ENCODE measurements at regions of chr17 and their contacts with region 1.

Region 1: GRCh38 chr17:43024407-43025289 is at the start of gene RND2:
- DNase-seq: peak; percentile 96 to 99
- ATAC-seq: peak; percentile 52 to 69
- H3K4me3 ChIP-seq: peak within 1 kb of the TSS; percentile 53
- H3K27ac ChIP-seq: peak within 1 kb of the TSS; percentile 78 to 88
- H3K4me1 ChIP-seq: peaks cover 21% of the 10 kb centered on the region
- CTCF ChIP-seq: peak; percentile 73
- EP300 ChIP-seq: no peak
- POLR2A ChIP-seq: peak; percentile 46
- RAD21 ChIP-seq: peak; percentile 79 to 81
- polyA plus RNA-seq, gene RND2: 0.19 and 0.33 TPM in 2 replicates

Region 2: DNA sequence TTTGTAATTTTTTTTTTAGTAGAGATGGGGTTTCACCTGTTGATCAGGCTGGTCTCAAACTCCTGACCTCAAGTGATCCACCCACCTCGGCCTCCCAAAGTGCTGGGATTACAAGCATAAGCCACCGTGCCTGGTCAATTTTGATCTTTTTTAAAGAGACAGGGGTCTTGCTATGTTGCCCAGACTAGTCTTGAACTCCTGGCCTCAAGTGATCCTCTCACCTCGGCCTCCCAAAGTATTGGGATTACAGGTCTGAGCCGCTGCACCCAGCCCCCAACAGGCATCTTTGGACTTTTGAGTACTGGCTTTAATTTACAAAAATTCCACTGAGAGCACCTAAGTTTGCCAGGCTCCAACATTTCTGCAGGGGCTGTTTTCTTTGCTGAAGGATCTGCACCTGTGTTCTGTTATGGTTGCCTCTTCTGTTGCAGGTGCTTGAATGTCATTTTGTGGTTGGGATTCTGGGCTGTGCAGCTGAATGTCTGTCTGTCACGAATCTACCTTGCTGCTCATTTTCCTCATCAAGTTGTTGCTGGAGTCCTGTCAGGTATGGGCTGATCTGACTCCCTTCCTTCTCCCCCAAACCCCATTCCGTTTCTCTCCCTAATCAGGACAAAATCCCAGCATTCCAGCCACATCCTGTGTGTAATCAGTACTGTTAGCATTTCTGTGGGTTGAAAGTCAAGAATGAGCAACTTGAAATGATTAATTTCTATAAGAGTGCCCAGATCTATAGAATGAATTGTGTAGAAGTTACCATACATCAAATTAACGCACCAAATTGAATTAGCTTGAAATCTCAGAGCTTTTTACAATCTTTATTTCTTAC is 115.6 kb before region 1 on chr17:
- CTCF ChIA-PET with region 1: no interaction called
- POLR2A ChIA-PET with region 1: no interaction called
- DNase-seq: no peak
- ATAC-seq: no peak
- H3K4me3 ChIP-seq: no peak overlapping the region
- H3K27ac ChIP-seq: no peak overlapping the region
- H3K4me1 ChIP-seq: no peaks in the 10 kb centered on the region
- CTCF ChIP-seq: no peak
- EP300 ChIP-seq: no peak
- POLR2A ChIP-seq: no peak
- RAD21 ChIP-seq: no peak

Region 3: DNA sequence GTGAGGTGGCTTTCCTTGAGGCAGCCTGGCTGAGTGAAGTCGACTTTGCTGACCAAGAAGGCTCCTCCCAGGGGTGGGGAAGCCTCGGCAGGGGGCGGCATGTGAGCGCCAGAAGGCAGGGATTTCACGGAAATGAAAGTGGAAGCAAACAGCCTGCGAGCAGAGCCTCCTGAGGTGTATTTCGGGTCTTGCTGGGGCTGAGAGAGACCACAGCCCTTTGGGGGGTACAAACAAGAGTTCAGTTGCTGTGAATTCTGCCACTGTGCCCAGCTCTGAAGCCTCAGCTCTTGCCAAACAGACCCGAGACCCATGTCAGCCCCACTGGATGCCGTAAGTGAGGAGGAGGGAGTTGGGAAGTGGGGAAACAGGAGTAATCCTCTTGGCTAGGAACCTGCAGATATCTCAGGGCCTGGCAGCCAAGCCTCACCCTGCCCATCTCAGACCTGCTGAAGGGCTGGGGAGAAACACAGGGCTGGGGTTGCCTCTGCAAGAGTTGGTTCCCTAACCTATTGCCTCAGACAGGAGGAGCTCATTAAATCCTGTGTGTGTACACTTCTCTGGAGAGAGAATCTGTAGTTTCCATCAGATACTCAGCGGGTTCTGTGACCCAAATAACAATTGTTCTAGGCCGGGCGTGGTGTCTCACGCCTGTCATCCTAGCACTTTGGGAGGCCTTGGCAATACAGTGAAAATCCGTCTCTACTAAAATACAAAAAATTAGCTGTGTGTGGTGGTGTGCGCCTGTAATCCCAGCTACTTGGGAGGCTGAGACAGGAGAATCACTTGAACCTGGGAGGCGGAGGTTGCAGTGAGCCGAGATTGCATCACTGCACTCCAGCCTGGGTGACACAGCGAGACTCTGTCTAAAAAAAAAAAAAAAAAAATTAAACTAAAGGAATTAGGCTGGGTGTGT is 17.8 kb before region 1 on chr17 and contains the start of gene IFI35:
- CTCF ChIA-PET with region 1: interaction called, 20 read pairs
- POLR2A ChIA-PET with region 1: interaction called, 4 read pairs
- DNase-seq: peak; percentile 80 to 85
- ATAC-seq: peak; percentile 82 to 84
- H3K4me3 ChIP-seq: peak within 1 kb of the TSS; percentile 44
- H3K27ac ChIP-seq: peak within 1 kb of the TSS; percentile 83 to 92
- H3K4me1 ChIP-seq: peaks cover 32% of the 10 kb centered on the region; the same call in 2 of the 3 replicates
- CTCF ChIP-seq: peak; percentile 41
- EP300 ChIP-seq: no peak
- POLR2A ChIP-seq: peak; percentile 41; the same call in 1 of the 2 replicates
- RAD21 ChIP-seq: peak; percentile 59 to 66
- polyA plus RNA-seq, gene IFI35: 20.2 and 21.3 TPM in 2 replicates

Region 4: GRCh38 chr17:43056051-43056450 is 31.4 kb after region 1 on chr17:
- CTCF ChIA-PET with region 1: interaction called, 11 read pairs
- POLR2A ChIA-PET with region 1: no interaction called
- DNase-seq: no peak
- ATAC-seq: no peak
- H3K4me3 ChIP-seq: no peak overlapping the region
- H3K27ac ChIP-seq: no peak overlapping the region
- H3K4me1 ChIP-seq: no peaks in the 10 kb centered on the region
- CTCF ChIP-seq: no peak
- EP300 ChIP-seq: no peak
- POLR2A ChIP-seq: no peak
- RAD21 ChIP-seq: no peak

Region 5: DNA sequence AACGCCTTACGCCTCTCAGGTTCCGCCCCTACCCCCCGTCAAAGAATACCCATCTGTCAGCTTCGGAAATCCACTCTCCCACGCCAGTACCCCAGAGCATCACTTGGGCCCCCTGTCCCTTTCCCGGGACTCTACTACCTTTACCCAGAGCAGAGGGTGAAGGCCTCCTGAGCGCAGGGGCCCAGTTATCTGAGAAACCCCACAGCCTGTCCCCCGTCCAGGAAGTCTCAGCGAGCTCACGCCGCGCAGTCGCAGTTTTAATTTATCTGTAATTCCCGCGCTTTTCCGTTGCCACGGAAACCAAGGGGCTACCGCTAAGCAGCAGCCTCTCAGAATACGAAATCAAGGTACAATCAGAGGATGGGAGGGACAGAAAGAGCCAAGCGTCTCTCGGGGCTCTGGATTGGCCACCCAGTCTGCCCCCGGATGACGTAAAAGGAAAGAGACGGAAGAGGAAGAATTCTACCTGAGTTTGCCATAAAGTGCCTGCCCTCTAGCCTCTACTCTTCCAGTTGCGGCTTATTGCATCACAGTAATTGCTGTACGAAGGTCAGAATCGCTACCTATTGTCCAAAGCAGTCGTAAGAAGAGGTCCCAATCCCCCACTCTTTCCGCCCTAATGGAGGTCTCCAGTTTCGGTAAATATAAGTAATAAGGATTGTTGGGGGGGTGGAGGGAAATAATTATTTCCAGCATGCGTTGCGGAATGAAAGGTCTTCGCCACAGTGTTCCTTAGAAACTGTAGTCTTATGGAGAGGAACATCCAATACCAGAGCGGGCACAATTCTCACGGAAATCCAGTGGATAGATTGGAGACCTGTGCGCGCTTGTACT is 100.7 kb after region 1 on chr17 and contains the start of gene BRCA1:
- CTCF ChIA-PET with region 1: interaction called, 9 read pairs
- POLR2A ChIA-PET with region 1: interaction called, 12 read pairs
- DNase-seq: peak; percentile 100
- ATAC-seq: peak; percentile 97 to 98
- H3K4me3 ChIP-seq: peak within 1 kb of the TSS; percentile 78
- H3K27ac ChIP-seq: peak within 1 kb of the TSS; percentile 90
- H3K4me1 ChIP-seq: peaks cover 15% of the 10 kb centered on the region
- CTCF ChIP-seq: no peak
- EP300 ChIP-seq: no peak
- POLR2A ChIP-seq: peak; percentile 37
- RAD21 ChIP-seq: no peak
- polyA plus RNA-seq, gene BRCA1: 62.5 and 71.8 TPM in 2 replicates

Region 6: GRCh38 chr17:43135454-43135819 is 110.8 kb after region 1 on chr17:
- CTCF ChIA-PET with region 1: no interaction called
- POLR2A ChIA-PET with region 1: no interaction called
- DNase-seq: no peak
- ATAC-seq: 0 out of 6 replicates have a peak, but pooled peaks of 1 of the 2 experiments have one; percentile 20
- H3K4me3 ChIP-seq: no peak overlapping the region
- H3K27ac ChIP-seq: no peak overlapping the region
- H3K4me1 ChIP-seq: no peaks in the 10 kb centered on the region
- CTCF ChIP-seq: no peak
- EP300 ChIP-seq: no peak
- POLR2A ChIP-seq: no peak
- RAD21 ChIP-seq: no peak

Measured in A549 (cell line).